K562 (cell line): ENCODE measurements at regions of chr2 and their contacts with region 1.

Region 1: DNA sequence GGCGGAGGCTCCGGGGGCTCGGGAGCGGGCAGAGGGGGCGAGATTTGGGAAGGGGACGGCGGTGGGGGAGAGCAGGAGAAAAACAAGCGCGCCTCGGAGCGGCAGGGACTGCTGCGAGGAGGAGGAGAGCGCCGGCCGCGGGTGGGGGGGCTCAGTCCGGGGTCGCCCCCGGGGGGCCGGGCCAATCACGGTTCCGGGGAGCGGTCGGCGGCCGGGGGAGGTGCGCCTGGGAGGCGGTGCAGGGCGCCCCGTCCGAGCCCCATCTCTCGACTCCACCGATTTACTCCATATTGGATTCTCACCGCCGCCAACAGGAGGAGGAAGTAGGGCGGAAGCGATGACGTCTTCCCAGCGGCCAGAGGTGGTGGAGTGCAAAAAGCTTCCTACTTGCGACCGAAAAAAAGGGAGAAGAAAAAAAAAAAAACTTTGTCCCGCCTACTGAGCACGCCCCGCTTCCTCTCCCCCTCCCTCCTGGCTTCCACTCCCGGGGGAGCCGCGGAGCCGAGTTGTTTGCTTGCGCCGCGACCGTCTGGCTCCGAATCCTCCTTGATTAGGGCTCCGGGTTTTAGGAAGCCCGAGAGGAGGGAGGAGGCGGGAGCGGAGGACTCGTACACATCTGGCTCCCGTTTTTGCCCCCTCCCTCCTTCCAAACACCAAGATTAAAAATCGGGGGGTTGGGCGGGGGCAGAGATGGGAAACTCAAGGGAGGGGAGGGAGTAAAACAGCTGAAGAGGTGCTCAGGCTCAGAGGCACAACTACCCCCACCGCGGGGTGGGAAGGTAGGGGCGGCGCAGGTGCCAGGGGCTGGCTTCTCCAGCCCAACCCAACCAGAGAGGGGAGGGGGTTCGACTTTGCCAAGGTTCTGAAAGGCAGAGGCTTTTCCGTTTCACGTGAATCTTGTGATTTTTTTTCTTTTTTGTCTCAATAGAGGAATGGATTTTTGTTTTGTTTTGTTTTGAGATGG is at the start of gene SPRED2:
- DNase-seq: peak; percentile 80 to 97 (median 86)
- ATAC-seq: peak; percentile 64
- H3K4me3 ChIP-seq: peak within 1 kb of the TSS; percentile 85
- H3K27ac ChIP-seq: peak within 1 kb of the TSS; percentile 92
- H3K4me1 ChIP-seq: peaks cover 31 to 52% of the 10 kb centered on the region in 2 experiments
- H3K27me3 ChIP-seq: no peaks in the 10 kb centered on the region
- CTCF ChIP-seq: peak in 2 of 3 experiments; percentile 10; a peak in 3 of 6 replicates
- EP300 ChIP-seq: peak; percentile 68
- POLR2A ChIP-seq: peak; percentile 79
- RAD21 ChIP-seq: peak; percentile 28 to 33
- polyA plus RNA-seq, gene SPRED2: 4.6 to 6.4 TPM

Region 2: DNA sequence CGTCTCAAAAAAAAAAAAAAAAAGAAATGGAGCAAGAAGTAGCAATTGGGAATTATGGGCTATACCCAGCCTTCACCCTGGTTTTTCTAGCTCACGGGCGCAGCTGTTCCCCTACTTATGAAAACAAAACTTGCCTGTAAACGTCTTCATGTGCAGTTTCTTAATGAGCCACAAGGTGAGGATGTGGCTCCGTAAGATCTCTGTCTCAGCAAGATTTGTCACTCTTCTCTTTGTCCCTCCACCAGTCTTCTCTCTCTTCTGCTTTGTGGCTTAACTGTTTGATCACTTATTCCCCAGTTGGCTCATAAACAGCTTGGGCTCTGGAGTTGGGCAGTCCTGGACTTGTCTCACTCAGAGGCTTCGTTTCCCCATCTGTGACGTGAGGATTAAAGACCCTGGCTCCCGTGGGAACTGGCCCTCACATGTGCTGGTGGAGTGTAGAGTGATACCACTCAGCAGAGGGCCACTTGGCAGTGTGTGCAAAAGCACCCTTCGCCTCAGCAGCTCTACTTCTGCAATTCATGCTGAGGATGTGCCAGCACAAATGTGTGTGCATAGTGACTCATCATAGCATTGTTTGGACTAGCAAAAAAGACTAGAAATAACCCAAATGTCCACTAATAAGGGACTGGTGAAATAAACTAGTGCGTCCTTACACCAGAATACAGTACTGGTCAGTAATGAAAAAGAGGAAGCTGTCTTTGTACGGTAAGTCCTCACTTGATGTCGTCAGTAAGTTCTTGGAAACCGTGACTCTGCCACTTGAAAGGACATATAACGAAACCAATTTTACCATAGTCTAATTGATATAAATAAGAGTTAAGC is 367.6 kb before region 1 on chr2:
- CTCF ChIA-PET with region 1: no interaction called
- POLR2A ChIA-PET with region 1: interaction called, 4 read pairs
- in situ Hi-C with region 1: no loop called
- intact Hi-C with region 1: loop called (anchors 10 kb)
- DNase-seq: peak; percentile 51 to 79 (median 57)
- ATAC-seq: peak; percentile 81
- H3K4me3 ChIP-seq: no peak overlapping the region
- H3K27ac ChIP-seq: peak overlapping the region; percentile 76
- H3K4me1 ChIP-seq: peaks cover 23 to 36% of the 10 kb centered on the region in 2 experiments
- H3K27me3 ChIP-seq: no peaks in the 10 kb centered on the region
- CTCF ChIP-seq: peak; percentile 80 to 90 (median 84)
- EP300 ChIP-seq: 0 out of 2 replicates have a peak, but pooled peaks have one; percentile 9
- POLR2A ChIP-seq: no peak
- RAD21 ChIP-seq: peak; percentile 80 to 93

Region 3: DNA sequence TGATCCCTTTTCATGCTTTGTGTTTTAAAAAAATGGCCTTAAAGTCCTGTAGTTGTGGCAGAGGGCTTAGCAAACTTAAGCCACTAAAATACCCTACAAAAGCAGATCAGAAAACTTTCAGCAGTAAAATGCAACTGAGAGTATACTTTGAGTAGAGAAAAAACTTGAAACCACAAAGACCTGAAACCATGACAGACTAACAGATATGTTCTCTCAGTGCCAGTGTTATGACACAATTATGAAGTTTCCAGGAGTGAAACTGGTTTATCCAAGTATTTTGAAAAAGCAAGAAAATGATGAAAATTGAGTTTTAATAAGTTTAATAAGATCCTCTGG is 74.6 kb before region 1 on chr2:
- CTCF ChIA-PET with region 1: no interaction called
- POLR2A ChIA-PET with region 1: no interaction called
- in situ Hi-C with region 1: no loop called
- intact Hi-C with region 1: loop called (anchors 2 kb)
- DNase-seq: no peak
- ATAC-seq: no peak
- H3K4me3 ChIP-seq: no peak overlapping the region
- H3K27ac ChIP-seq: peak overlapping the region; percentile 89; the same call in 1 of the 3 replicates
- H3K4me1 ChIP-seq: peaks cover 20 to 48% of the 10 kb centered on the region in 2 experiments
- H3K27me3 ChIP-seq: no peaks in the 10 kb centered on the region
- CTCF ChIP-seq: no peak
- EP300 ChIP-seq: no peak
- POLR2A ChIP-seq: no peak
- RAD21 ChIP-seq: no peak

Region 4: DNA sequence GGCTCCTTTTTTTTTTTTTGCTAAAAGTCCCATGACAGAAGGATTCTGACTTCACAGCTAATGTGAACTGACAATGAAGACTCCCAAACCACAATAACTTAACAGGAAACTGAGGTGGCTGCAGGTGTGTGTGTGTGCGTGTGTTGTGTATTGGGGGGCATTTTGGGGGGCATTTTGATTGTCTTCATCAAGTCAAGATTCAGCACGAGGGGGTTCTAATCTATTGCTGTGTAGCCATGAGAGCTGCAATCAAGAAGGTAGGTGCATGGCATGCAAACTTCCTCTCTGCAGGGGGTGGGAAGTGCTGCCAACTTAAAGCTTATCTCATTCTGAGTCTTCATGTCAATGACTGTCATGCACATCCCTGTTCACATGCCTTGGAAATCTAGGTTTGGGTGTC is 25.3 kb before region 1 on chr2:
- CTCF ChIA-PET with region 1: no interaction called
- POLR2A ChIA-PET with region 1: interaction called, 10 read pairs
- in situ Hi-C with region 1: no loop called
- intact Hi-C with region 1: no loop called
- DNase-seq: no peak
- ATAC-seq: no peak
- H3K4me3 ChIP-seq: no peak overlapping the region
- H3K27ac ChIP-seq: no peak overlapping the region; the same call in 1 of the 3 replicates
- H3K4me1 ChIP-seq: peaks cover 14 to 40% of the 10 kb centered on the region in 2 experiments
- H3K27me3 ChIP-seq: no peaks in the 10 kb centered on the region
- CTCF ChIP-seq: no peak
- EP300 ChIP-seq: no peak
- POLR2A ChIP-seq: no peak
- RAD21 ChIP-seq: no peak

Region 5: DNA sequence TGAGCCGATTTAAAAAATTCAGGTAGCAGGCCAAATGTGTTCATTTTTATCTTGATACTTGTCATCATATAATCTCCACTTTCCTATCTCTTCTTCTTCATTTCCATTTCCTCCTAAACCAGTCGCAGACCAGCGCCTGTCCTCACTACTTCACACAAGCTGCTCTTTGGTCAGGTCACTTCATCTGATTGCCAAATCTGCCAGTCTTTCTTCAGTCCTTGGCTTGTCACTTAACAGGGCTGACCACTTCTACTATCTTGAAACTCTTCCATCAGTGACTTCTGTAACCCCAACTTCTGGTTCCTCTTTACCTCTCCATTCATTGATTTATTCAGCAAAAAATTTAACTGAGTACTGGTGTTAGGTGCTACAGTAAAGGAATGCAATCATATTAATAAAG is 17.9 kb after region 1 on chr2:
- CTCF ChIA-PET with region 1: no interaction called
- POLR2A ChIA-PET with region 1: interaction called, 10 read pairs
- in situ Hi-C with region 1: no loop called
- intact Hi-C with region 1: no loop called
- DNase-seq: no peak
- ATAC-seq: no peak
- H3K4me3 ChIP-seq: no peak overlapping the region
- H3K27ac ChIP-seq: no peak overlapping the region
- H3K4me1 ChIP-seq: peaks cover 0 to 3% of the 10 kb centered on the region in 2 experiments; a peak in 1 of 5 replicates
- H3K27me3 ChIP-seq: no peaks in the 10 kb centered on the region
- CTCF ChIP-seq: no peak
- EP300 ChIP-seq: no peak
- POLR2A ChIP-seq: no peak
- RAD21 ChIP-seq: no peak

Region 6: DNA sequence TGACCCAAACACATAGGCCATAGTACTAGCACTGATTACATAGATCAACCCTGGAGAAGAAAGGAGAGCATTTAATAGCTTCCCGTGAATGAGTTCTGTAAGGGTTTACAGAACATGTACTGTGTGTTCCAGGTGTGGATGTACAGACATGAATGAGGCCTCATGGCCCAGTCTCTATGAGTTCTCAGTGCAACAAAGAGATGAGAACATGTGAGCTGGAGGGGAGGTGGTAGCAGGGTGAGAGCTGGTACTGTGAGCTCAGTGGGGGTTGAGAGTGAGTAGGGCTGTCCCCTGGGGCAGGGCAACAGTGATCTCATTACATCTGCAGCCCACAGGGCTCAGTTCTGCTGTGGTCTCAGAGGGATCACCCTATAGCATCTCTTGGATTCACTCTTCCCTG is 42.5 kb after region 1 on chr2:
- CTCF ChIA-PET with region 1: no interaction called
- POLR2A ChIA-PET with region 1: interaction called, 12 read pairs
- in situ Hi-C with region 1: no loop called
- intact Hi-C with region 1: no loop called
- DNase-seq: no peak
- ATAC-seq: no peak
- H3K4me3 ChIP-seq: no peak overlapping the region
- H3K27ac ChIP-seq: no peak overlapping the region
- H3K4me1 ChIP-seq: peaks cover 2 to 10% of the 10 kb centered on the region in 2 experiments; a peak in 1 of 5 replicates
- H3K27me3 ChIP-seq: no peaks in the 10 kb centered on the region
- CTCF ChIP-seq: no peak
- EP300 ChIP-seq: no peak
- POLR2A ChIP-seq: no peak
- RAD21 ChIP-seq: no peak

Region 7: DNA sequence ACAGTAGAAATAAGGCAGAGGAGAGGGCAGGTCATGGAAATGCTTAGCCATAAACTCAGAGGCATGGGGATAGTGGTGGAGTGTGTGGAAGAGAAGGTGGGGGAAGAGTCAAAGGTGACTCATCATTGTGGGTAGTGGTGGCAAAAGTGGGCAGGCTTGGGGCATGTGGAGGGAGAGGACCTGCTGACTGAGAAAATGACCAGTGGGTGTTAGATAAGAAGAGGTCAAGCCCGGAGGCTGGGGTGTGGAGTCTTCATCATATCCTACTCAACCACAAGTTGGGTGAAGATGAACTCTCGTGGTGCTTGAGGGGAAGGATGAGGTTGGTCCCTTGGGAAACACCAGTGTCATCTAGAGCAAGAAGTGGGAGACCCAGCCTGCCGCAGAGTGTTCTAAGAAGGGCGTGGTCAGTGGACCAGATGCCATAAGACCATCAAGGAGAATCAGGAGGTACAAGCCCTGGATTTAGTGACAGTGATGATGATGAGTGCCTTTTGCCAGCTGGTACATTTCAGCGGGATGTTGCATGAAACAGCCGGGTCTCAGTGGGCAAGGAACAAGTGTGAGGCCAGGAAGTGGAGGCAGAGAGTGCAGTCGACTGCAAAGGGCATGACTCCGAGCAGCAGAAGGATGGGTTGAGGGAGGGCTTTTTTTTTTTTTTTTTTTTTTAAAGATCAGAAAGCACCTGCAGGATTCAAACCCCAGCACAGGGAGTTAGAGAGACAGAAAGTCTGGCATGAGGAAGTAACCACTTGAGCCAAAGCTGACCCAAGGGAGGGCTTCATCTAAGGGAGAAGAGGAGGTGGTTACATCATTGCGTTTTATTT is 122.5 kb after region 1 on chr2:
- CTCF ChIA-PET with region 1: interaction called, 5 read pairs
- POLR2A ChIA-PET with region 1: interaction called, 3 read pairs
- in situ Hi-C with region 1: no loop called
- intact Hi-C with region 1: loop called (anchors 2 kb)
- DNase-seq: peak in 3 of 4 experiments; percentile 23 to 50 (median 30)
- ATAC-seq: no peak
- H3K4me3 ChIP-seq: no peak overlapping the region
- H3K27ac ChIP-seq: no peak overlapping the region
- H3K4me1 ChIP-seq: peaks cover 11 to 14% of the 10 kb centered on the region in 2 experiments; a peak in 4 of 5 replicates
- H3K27me3 ChIP-seq: no peaks in the 10 kb centered on the region
- CTCF ChIP-seq: no peak
- EP300 ChIP-seq: no peak
- POLR2A ChIP-seq: no peak
- RAD21 ChIP-seq: no peak